Dendritic cell treated with granulocyte-macrophage colony-stimulating factor and Interleukin-4, amounts not matched to agents 40 ng/mL and 50 ng/mL, for 4 days (primary cell): ENCODE measurements at regions of chr11 and their contacts with region 1.

Region 1: GRCh38 chr11:64269380-64270234 is 14.9 kb downstream of the BAD start:
- H3K4me3 Mint-ChIP-seq: peak overlapping the region; percentile 98
- H3K27ac Mint-ChIP-seq: peak overlapping the region; percentile 91
- H3K4me1 Mint-ChIP-seq: peaks cover 53% of the 10 kb centered on the region
- H3K27me3 Mint-ChIP-seq: no peaks in the 10 kb centered on the region

Region 2: GRCh38 chr11:64192434-64192833 is 77.2 kb before region 1 on chr11:
- intact Hi-C with region 1: no loop called
- H3K4me3 Mint-ChIP-seq: no peak overlapping the region
- H3K27ac Mint-ChIP-seq: no peak overlapping the region
- H3K4me1 Mint-ChIP-seq: peaks cover 38% of the 10 kb centered on the region
- H3K27me3 Mint-ChIP-seq: no peaks in the 10 kb centered on the region

Region 3: GRCh38 chr11:64204464-64204989 is 65.1 kb before region 1 on chr11:
- intact Hi-C with region 1: loop called (anchors 2 kb)
- H3K4me3 Mint-ChIP-seq: peak overlapping the region; percentile 8
- H3K27ac Mint-ChIP-seq: peak overlapping the region; percentile 91
- H3K4me1 Mint-ChIP-seq: peaks cover 75% of the 10 kb centered on the region
- H3K27me3 Mint-ChIP-seq: no peaks in the 10 kb centered on the region

Region 4: DNA sequence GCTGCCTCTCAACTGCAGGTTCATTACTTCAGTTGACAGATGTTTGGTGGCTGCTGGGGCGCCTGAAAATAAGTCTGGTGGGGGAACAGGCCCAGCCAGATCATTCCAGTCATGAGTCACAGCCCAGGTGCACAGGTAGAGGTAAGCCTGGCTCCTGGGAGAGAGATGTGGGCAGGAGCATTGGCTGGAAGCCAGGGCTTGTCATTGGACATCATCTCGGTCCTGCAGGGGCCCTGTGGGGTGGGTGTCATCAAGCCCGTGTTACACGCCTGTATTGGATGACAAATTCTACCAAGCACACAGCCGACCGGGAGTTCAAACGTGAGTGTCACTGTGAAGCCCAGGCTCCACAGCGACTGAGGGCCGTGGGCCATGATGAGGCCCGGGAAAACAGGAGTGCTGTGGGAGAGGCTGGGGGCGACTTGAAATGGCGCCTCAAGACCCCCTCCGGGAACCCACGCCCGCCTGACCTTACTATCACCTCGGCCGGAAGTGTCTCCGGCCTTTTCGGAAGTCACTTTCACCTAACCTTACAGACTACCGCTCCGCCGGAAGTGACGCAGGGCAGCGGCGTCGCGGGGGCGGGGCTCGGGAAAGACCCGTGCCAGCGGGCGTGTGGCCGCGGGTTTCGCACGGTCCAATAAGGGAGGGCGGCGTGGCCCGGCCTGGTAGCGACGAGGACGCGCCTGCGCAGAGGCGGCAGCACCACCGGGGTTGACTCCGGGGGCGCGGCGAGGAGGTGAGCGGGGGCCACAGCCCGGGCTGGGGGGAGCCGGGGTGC is 29.0 kb before region 1 on chr11 and contains the start of gene FKBP2:
- intact Hi-C with region 1: loop called (anchors 2 kb)
- H3K4me3 Mint-ChIP-seq: peak within 1 kb of the TSS; percentile 83
- H3K27ac Mint-ChIP-seq: peak within 1 kb of the TSS; percentile 99
- H3K4me1 Mint-ChIP-seq: peaks cover 83% of the 10 kb centered on the region
- H3K27me3 Mint-ChIP-seq: no peaks in the 10 kb centered on the region

Region 5: DNA sequence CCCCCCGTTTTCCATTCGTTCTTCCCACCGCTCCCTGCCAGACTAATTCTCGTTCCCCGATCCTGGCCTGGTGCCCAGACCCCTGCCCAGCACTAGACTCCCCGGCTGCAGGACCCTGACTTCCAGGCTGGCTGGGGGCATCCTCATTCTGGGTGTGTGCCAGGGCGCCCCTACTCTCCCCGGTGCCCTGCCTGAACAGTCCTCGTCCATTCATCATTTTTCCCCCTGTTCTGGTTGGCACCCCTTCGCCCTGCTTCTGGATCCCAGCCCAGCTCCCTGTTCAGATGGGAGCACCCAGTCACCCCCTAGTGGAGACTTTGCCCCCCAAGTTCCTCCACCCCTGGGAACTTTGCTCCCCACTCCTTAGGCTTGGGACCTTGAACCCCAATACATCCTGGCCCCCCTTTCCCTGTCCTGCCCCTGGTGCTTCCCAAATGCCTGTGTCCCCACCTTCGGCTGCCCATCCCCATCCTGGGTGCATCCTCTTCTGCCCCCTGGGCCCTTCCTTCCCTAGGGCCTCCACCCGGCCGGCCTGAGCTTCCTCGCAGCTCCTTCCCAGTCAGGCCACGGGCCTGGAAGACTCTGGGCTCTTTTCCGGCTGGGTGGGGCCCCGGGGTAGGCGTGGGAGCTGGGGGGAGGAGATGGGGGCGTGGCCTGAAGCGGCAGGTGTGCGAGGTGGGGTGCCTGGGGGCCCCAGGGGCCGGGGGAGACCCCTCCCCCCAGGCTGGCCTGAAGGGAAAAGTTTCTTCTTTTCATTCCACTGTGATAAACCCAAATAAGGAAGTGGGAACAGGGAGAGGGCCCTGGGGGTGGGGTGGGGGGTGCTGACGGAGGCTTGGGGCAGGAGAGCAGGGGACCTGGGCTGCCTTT is 17.4 kb before region 1 on chr11:
- intact Hi-C with region 1: loop called (anchors 2 kb)
- H3K4me3 Mint-ChIP-seq: peak overlapping the region; percentile 99
- H3K27ac Mint-ChIP-seq: peak overlapping the region; percentile 88
- H3K4me1 Mint-ChIP-seq: peaks cover 59% of the 10 kb centered on the region
- H3K27me3 Mint-ChIP-seq: peaks cover 9% of the 10 kb centered on the region

Region 6: DNA sequence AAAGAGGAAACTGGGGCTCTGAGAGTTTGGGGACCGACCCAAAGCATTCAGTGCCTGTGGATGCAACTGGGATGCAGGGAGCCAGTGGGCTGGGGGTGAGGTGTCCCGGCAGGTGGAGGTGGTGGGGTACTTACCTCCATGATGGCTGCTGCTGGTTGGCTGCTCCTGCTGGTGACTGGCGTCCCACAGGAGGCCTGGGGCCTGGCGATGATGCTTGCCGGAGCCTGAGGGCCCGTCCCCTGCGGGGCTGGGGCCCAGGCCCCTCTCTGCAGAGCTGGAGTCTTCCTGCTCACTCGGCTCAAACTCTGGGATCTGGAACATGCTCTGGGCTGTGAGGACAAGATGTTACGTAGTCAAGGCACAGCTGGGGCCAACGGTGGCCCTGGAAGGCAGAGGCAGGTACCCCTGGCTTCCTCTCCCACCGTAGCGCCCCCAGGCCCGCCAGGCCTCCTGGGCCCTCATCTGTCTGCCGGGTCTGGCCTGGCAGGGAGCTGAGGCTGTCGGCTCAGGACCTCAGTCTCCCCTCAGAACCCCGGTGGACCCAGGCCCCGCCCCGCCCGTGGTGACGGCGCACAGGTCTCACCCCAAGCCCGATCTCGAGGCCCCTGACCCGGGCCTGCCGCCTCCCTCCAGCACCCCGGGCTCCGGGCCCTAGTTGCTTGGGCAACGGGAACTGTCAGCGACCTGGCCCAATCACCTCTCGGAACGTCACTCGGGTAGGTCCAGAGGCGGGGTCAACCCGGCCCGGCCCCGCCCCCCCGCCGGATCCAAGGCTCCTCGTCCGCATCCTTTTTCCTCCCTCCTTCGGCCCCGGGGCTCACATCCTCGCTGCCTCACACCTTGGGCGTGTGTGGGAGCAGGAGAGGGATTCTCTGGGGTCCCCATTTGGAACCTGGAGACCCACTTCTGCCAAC is 14.7 kb after region 1 on chr11 and contains the start of gene BAD:
- intact Hi-C with region 1: loop called (anchors 1 kb)
- H3K4me3 Mint-ChIP-seq: peak within 1 kb of the TSS; percentile 76
- H3K27ac Mint-ChIP-seq: peak within 1 kb of the TSS; percentile 90
- H3K4me1 Mint-ChIP-seq: peaks cover 47% of the 10 kb centered on the region
- H3K27me3 Mint-ChIP-seq: peaks cover 10% of the 10 kb centered on the region